Activated T-helper 1 cell treated with anti-CD3 and anti-CD28 coated beads, Interleukin-12 subunit alpha, Interleukin-12 subunit beta, Interleukin-2, Interleukin-4 antibody, amounts not matched to agents 30 ng/mL and 10 ng/mL and 1 ng/mL, durations not matched to agents 14 hours and 24 hours and 36 hours (primary cell): ENCODE measurements at regions of chr15 and their contacts with region 1.

Region 1: DNA sequence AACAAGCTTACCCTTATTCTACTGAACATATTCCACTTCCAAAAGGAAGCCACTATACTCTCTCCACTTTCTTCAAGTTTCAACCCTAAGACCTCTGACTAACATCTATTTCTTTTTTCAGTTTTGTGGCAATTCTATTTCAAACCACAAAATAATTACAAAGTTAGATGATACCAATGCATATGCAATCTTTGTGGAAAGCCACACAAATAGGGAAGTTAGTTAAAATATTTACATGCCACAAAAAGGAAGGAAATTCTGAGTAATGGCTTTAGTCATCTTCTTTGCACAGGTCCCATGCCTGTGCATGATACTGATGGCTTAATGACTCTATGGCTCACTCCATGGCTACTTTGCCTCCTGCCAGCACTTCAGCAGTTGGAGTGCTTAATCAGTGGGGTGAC is 57.0 kb upstream of the MCTP2 start:
- DNase-seq: no peak
- H3K4me3 Mint-ChIP-seq: peak overlapping the region; percentile 38
- H3K27ac Mint-ChIP-seq: peak overlapping the region; percentile 85
- H3K4me1 Mint-ChIP-seq: peaks cover 58% of the 10 kb centered on the region
- H3K27me3 Mint-ChIP-seq: no peaks in the 10 kb centered on the region

Region 2: DNA sequence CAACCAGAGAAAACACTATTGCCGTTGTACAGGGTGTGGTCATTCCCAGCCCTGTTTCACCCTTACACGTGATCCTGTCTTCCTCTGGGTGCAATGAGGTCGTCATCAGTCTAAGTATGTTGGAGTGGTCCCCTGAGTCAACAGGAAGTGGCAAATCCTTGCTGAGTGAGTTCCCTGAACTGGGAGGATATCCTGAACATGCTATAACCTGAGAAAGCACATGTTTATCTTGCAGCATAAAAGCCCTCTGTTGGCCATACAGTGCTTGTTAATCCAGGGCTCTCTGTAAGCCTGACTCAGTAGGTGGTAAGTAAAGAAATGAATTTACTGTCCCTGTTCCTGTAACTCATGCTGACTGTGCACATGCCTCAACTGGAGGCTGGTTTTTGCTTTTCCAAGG is 607.6 kb before region 1 on chr15:
- intact Hi-C with region 1: no loop called
- DNase-seq: no peak
- H3K4me3 Mint-ChIP-seq: no peak overlapping the region
- H3K27ac Mint-ChIP-seq: no peak overlapping the region
- H3K4me1 Mint-ChIP-seq: peaks cover 4% of the 10 kb centered on the region
- H3K27me3 Mint-ChIP-seq: no peaks in the 10 kb centered on the region

Region 3: DNA sequence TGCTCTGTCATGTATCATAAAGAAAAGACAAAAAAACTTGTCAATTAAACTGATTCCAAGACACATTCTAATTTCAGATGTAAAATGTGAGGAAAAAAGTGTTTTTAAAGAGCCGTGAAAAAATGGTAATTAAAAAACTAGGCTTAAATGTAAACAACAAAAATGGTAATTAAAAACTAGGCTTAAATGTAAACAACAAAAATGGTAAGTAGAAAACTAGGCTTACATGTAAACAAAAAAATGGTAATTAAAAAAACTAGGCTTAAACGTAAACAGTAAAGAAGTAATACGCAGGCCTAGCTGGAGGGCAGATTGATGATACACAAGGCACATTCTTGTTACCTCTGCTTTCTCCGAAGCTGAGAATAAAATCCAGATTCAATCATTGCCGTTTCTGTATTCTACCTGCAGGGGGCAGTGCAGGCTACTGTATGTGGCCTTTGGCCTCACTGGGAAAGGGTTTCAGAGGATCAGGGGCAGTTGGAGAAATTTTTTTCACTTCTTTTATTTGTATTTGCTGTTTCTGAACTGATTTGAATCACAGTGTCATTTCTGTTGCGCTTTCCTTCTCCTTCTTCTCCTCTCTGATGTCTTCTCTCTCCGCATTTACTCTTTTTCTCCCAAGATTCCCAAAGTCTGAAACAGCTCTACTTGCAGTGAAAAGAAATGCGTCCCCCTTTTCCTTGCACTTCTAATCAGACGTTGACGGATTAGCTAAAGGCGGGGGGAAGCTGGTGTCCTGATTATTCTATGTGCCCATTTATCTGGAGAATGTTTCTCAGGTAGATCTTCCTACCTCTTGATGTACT is 10.2 kb before region 1 on chr15:
- intact Hi-C with region 1: loop called (anchors 1 kb)
- DNase-seq: peak; percentile 44
- H3K4me3 Mint-ChIP-seq: no peak overlapping the region
- H3K27ac Mint-ChIP-seq: no peak overlapping the region
- H3K4me1 Mint-ChIP-seq: peaks cover 10% of the 10 kb centered on the region
- H3K27me3 Mint-ChIP-seq: peaks cover 2% of the 10 kb centered on the region

Region 4: DNA sequence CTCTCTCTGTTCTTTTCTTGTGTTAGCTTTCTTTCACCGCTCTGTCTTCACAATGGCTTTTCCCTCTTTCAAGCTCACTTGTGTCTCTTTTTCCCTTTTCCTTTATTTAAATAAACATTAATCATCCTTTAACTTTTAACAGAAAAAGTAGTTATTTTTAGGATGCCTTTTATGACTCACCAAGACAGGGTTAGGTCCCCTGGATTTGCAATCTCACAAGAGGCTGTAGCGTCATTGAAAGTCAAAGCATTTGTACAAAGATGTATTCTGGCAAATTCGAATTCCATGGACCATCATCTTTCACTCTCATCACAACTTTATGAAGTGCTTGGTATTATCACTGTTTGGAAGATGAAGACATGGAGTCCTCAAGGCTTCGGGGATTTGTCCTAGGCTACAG is 22.1 kb after region 1 on chr15:
- intact Hi-C with region 1: no loop called
- DNase-seq: no peak
- H3K4me3 Mint-ChIP-seq: no peak overlapping the region
- H3K27ac Mint-ChIP-seq: no peak overlapping the region
- H3K4me1 Mint-ChIP-seq: no peaks in the 10 kb centered on the region
- H3K27me3 Mint-ChIP-seq: no peaks in the 10 kb centered on the region

Region 5: DNA sequence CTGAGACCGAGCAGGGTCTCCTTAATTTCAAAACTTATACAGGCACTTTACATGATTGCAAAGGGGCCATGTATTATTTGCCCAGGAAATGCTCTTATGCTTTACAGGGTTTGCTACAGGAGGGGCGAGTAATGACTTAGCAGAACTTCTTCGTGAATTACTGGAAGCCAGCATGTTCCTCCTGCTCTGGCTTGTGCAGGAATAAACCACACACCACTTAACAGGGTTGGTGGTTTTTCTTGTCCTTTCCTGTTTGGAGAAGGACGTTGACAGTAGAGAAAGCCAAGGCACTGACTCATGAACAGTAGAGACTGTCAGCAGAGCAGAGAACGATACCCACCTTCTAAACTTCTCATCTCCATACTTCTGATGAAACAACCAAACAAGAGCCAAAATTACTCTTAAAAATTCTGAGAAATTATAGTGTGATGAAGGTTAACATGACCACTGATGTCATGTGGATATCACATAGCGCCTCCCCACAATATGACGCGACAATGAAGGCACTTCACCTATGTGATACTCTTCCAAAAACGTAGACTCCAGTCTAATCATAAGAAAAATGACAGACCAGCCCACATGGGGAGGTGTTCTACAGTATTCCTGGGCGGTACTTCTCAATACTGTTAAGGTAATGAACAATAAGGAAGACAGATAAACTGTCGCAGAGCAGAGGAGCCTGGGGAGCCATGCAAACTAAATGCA is 32.2 kb after region 1 on chr15:
- intact Hi-C with region 1: loop called (anchors 1 kb)
- DNase-seq: peak; percentile 69
- H3K4me3 Mint-ChIP-seq: peak overlapping the region; percentile 79
- H3K27ac Mint-ChIP-seq: peak overlapping the region; percentile 97
- H3K4me1 Mint-ChIP-seq: peaks cover 41% of the 10 kb centered on the region
- H3K27me3 Mint-ChIP-seq: no peaks in the 10 kb centered on the region

Region 6: GRCh38 chr15:94297558-94297957 is 123.2 kb after region 1 on chr15:
- intact Hi-C with region 1: no loop called
- DNase-seq: no peak
- H3K4me3 Mint-ChIP-seq: peak overlapping the region; percentile 72
- H3K27ac Mint-ChIP-seq: peak overlapping the region; percentile 93
- H3K4me1 Mint-ChIP-seq: peaks cover 87% of the 10 kb centered on the region
- H3K27me3 Mint-ChIP-seq: no peaks in the 10 kb centered on the region

Region 7: GRCh38 chr15:94610069-94610468 is 435.7 kb after region 1 on chr15:
- intact Hi-C with region 1: loop called (anchors 1 kb)
- DNase-seq: peak; percentile 29
- H3K4me3 Mint-ChIP-seq: peak overlapping the region; percentile 51
- H3K27ac Mint-ChIP-seq: no peak overlapping the region
- H3K4me1 Mint-ChIP-seq: peaks cover 68% of the 10 kb centered on the region
- H3K27me3 Mint-ChIP-seq: peaks cover 40% of the 10 kb centered on the region